Ascending aorta (tissue), 2 donors: ENCODE measurements at regions of chr2 and their contacts with region 1.

Region 1: GRCh38 chr2:46915811-46916630 is 415 bp upstream of the MCFD2 start:
- DNase-seq: peak; percentile 86 to 98
- H3K4me3 ChIP-seq: peak overlapping the region; percentile 83 to 88
- H3K27ac ChIP-seq: peak overlapping the region; percentile 97 to 99
- H3K4me1 ChIP-seq: peaks cover 4 to 25% of the 10 kb centered on the region in 2 donors
- H3K27me3 ChIP-seq: no peaks in the 10 kb centered on the region
- CTCF ChIP-seq: no peak

Region 2: GRCh38 chr2:46967990-46968647 is 52.1 kb after region 1 on chr2:
- intact Hi-C with region 1: loop called (anchors 2 kb)
- DNase-seq: peak in 1 of 2 donors; percentile 96
- H3K4me3 ChIP-seq: peak overlapping the region; percentile 32 to 34
- H3K27ac ChIP-seq: peak overlapping the region; percentile 75 to 80
- H3K4me1 ChIP-seq: peaks cover 33 to 64% of the 10 kb centered on the region in 2 donors
- H3K27me3 ChIP-seq: no peaks in the 10 kb centered on the region
- CTCF ChIP-seq: no peak

Region 3: DNA sequence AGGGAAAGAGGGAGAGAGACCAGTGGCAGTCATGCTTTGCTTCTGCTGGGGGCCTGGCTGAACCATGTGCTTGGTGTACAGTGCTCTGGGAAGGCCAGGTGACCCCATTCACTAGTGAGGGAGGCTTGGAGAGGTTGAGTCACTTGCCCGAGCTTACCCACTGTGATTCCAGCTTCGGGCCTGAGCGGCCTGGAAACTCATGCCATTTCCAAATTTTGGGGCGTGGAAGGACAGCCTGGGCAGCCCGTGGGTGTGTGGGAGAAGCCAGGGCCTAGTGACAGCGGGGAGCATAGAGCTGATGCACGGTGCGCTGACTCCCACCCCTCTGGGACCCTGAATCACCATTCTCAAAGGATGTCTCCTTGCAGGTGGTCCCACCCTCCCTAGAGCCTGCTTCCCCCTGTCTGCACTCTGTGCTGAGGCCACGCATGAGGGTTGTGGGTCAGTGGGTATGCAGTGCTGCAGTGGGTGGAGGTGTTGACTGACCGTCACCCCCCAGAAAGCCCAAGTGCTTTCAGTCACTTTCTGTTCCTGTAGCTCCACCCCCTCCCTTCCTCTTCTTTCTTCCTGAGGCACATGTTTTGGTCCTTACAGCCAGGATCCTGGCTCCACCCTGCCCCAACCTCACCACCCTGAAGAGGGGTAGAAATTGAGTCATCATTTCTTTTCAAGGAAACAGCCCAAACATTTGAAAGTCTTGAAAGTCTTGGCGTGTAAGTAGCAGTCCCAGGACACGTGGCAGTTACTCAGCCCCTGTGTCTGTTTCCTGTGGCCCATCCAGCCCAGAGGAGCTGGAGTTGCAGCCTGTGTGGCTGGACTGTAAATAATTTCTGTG is 68.8 kb after region 1 on chr2:
- intact Hi-C with region 1: loop called (anchors 2 kb)
- DNase-seq: peak; percentile 82 to 94
- H3K4me3 ChIP-seq: no peak overlapping the region
- H3K27ac ChIP-seq: peak overlapping the region; percentile 90 to 93
- H3K4me1 ChIP-seq: peaks cover 28 to 63% of the 10 kb centered on the region in 2 donors
- H3K27me3 ChIP-seq: no peaks in the 10 kb centered on the region
- CTCF ChIP-seq: no peak

Region 4: DNA sequence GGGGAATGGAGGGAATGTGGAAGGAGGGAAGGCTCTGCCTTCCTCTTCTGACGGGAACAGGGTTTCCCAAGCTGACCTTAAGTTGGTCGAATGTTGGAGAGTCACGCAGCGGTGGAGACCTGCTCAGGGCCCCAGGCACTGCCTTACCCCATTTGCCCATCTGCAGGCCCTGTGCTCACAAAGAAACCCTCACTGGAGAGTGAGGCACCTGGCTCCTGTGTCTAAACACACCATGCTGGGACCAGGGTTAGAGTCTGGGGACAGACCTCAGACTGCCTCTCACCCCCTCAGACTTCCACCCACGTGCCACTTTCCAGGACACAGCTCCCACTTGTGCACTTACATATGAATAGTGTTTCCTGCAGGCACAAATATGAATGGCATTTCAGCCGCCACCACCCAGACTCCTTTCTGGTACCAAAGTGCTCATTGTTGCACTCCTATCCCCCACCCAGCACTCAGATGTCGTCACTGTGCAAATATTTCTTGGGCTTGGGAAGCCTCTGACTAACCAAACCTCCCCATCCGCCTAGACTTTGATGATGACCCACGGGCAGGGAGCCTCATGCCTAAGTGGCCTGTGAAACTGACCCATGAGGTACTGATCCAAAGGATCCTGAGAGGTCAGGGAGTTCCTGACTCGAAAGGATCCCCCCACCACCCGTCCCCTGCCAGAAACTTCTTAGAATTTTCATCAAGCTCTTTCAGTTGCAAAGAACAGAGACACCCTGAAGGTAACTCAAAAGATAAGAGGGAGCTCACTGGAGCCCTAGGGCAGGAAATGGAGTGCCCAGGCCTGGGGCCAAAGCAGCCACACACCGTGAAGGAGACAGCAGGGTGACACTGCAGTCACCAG is 160.8 kb after region 1 on chr2:
- intact Hi-C with region 1: loop called (anchors 5 kb)
- DNase-seq: peak; percentile 47 to 95
- H3K4me3 ChIP-seq: no peak overlapping the region
- H3K27ac ChIP-seq: peak overlapping the region; percentile 94 to 98
- H3K4me1 ChIP-seq: peaks cover 5 to 56% of the 10 kb centered on the region in 2 donors
- H3K27me3 ChIP-seq: no peaks in the 10 kb centered on the region
- CTCF ChIP-seq: no peak

Region 5: GRCh38 chr2:47272031-47272864 is 356.2 kb after region 1 on chr2:
- intact Hi-C with region 1: loop called (anchors 5 kb)
- DNase-seq: peak; percentile 22 to 79
- H3K4me3 ChIP-seq: peak overlapping the region; percentile 40 to 55
- H3K27ac ChIP-seq: peak overlapping the region; percentile 54 to 71
- H3K4me1 ChIP-seq: peaks cover 11 to 23% of the 10 kb centered on the region in 2 donors
- H3K27me3 ChIP-seq: no peaks in the 10 kb centered on the region
- CTCF ChIP-seq: peak; percentile 97

Region 6: GRCh38 chr2:47323009-47323821 is 407.2 kb after region 1 on chr2:
- intact Hi-C with region 1: loop called (anchors 5 kb)
- DNase-seq: peak in 1 of 2 donors; percentile 84
- H3K4me3 ChIP-seq: no peak overlapping the region
- H3K27ac ChIP-seq: no peak overlapping the region
- H3K4me1 ChIP-seq: no peaks in the 10 kb centered on the region
- H3K27me3 ChIP-seq: no peaks in the 10 kb centered on the region
- CTCF ChIP-seq: peak; percentile 97 to 99 (median 99)